ENCODE measurements at regions of chr2 and their contacts with region 1.

Region 1: GRCh38 chr2:224357098-224357901 is 44.6 kb downstream of the FAM124B start:
- DNase-seq: peak; percentile 26 to 50
- H3K4me3 ChIP-seq: no peak overlapping the region
- H3K27ac ChIP-seq: no peak overlapping the region
- H3K4me1 ChIP-seq: no peaks in the 10 kb centered on the region
- H3K27me3 ChIP-seq: no peaks in the 10 kb centered on the region
- CTCF ChIP-seq: peak; percentile 37 to 91 (median 79)
- POLR2A ChIP-seq: no peak

Region 2: GRCh38 chr2:224479826-224480225 is 122.5 kb after region 1 on chr2:
- intact Hi-C with region 1: no loop called
- DNase-seq: no peak
- H3K4me3 ChIP-seq: no peak overlapping the region
- H3K27ac ChIP-seq: no peak overlapping the region
- H3K4me1 ChIP-seq: peaks cover 2% of the 10 kb centered on the region in 2 donors
- H3K27me3 ChIP-seq: no peaks in the 10 kb centered on the region
- CTCF ChIP-seq: no peak
- POLR2A ChIP-seq: no peak

Region 3: GRCh38 chr2:224650815-224651439 is 293.6 kb after region 1 on chr2:
- intact Hi-C with region 1: loop called (anchors 5 kb)
- DNase-seq: no peak
- H3K4me3 ChIP-seq: no peak overlapping the region
- H3K27ac ChIP-seq: no peak overlapping the region
- H3K4me1 ChIP-seq: no peaks in the 10 kb centered on the region
- H3K27me3 ChIP-seq: no peaks in the 10 kb centered on the region
- CTCF ChIP-seq: peak; percentile 55 to 84 (median 76)
- POLR2A ChIP-seq: no peak

Region 4: GRCh38 chr2:224778474-224778877 is 421.2 kb after region 1 on chr2:
- intact Hi-C with region 1: loop called (anchors 10 kb)
- DNase-seq: peak; percentile 51 to 62
- H3K4me3 ChIP-seq: no peak overlapping the region
- H3K27ac ChIP-seq: no peak overlapping the region
- H3K4me1 ChIP-seq: peaks cover 0 to 10% of the 10 kb centered on the region in 2 donors
- H3K27me3 ChIP-seq: no peaks in the 10 kb centered on the region
- CTCF ChIP-seq: peak in 5 of 6 experiments; percentile 33 to 81 (median 70)
- POLR2A ChIP-seq: no peak